Activated CD4-positive, alpha-beta memory T cell treated with anti-CD3 and anti-CD28 coated beads, Interleukin-2, amount 10 ng/mL, durations not matched to agents 7 days and 5 days (primary cell): ENCODE measurements at regions of chr17 and their contacts with region 1.

Region 1: GRCh38 chr17:38868817-38869525 is 887 bp upstream of the LASP1 start:
- DNase-seq: peak; percentile 90
- H3K4me3 Mint-ChIP-seq: peak overlapping the region; percentile 98
- H3K27ac Mint-ChIP-seq: peak overlapping the region; percentile 98
- H3K4me1 Mint-ChIP-seq: peaks cover 45% of the 10 kb centered on the region
- H3K27me3 Mint-ChIP-seq: no peaks in the 10 kb centered on the region

Region 2: GRCh38 chr17:38853292-38854219 is 15.4 kb before region 1 on chr17 and contains the start of gene RPL23:
- CTCF ChIA-PET with region 1: interaction called, 56 read pairs
- POLR2A ChIA-PET with region 1: interaction called, 201 read pairs
- DNase-seq: peak; percentile 94
- H3K4me3 Mint-ChIP-seq: peak within 1 kb of the TSS; percentile 95
- H3K27ac Mint-ChIP-seq: peak within 1 kb of the TSS; percentile 98
- H3K4me1 Mint-ChIP-seq: peaks cover 49% of the 10 kb centered on the region
- H3K27me3 Mint-ChIP-seq: no peaks in the 10 kb centered on the region
- total RNA-seq, gene RPL23: 933 to 960 TPM

Region 3: DNA sequence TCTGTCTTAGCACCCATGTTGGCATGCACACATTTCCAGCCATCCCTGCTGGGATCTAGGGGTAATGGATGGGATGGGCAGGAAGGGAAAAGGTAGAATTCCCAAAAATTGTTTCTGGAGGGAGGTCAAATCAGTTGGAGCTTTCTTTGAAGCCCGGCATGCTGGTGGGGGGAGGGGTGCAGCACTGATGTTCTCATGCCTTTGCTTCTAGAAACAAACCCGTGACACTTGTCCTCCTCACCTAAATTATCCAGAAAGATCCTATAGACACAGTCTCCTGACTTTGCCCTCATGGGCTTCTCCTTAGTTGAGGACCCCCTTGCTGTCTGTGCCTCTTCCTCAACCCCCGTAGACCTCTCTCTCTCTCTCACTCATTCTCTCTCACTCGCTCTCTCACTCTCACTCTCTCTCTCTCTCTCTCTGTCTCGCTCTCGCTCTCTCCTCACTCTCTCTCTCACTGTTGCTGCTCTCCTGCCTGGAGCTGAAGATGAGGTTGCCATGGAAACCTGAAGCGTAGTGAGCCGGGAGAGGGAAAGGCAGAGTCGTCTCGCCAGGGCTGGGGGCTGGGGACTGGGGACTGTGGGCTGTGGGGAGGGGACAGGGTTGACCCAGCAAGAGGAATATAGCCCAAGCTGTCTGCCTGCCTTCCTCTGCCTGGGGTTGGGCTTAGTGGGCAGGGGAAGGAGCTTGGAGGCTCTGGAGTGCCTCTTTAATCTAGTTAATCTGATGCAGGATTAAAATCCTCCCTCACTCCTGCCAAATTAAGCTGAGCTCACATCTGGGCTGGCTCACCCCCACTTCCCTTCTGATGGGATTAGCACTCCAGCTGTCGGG is 17.0 kb after region 1 on chr17:
- CTCF ChIA-PET with region 1: interaction called, 6 read pairs
- POLR2A ChIA-PET with region 1: interaction called, 39 read pairs
- DNase-seq: no peak
- H3K4me3 Mint-ChIP-seq: no peak overlapping the region
- H3K27ac Mint-ChIP-seq: peak overlapping the region; percentile 6
- H3K4me1 Mint-ChIP-seq: peaks cover 79% of the 10 kb centered on the region
- H3K27me3 Mint-ChIP-seq: no peaks in the 10 kb centered on the region

Region 4: DNA sequence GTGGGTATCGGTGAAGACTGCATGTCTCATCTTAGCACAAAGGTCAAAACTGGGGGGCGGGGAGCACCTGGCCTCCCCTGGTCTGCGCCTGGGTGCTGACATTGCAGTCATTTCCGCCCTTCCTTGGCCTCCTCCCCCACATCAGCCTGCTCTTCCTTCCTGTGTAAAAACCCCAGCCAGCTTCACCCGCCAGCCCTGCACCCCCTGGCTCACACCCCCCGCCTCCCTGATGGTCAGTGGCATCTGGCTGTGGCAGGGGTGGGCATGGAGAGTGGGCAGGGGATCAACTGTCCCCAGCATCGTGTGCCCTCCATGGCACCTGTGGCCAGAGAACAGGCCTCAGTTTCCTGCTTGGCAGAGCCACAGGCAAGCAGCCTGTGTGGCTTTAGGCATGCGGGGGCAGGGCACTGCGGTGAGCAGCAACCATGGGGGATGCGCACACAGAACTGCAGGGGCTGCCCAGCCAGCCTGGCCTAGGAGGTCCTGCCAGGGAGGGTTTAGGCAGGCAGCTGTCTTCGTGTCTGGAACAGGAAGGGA is 29.9 kb after region 1 on chr17:
- CTCF ChIA-PET with region 1: interaction called, 29 read pairs
- POLR2A ChIA-PET with region 1: interaction called, 144 read pairs
- DNase-seq: peak; percentile 86
- H3K4me3 Mint-ChIP-seq: peak overlapping the region; percentile 45
- H3K27ac Mint-ChIP-seq: peak overlapping the region; percentile 89
- H3K4me1 Mint-ChIP-seq: peaks cover 65% of the 10 kb centered on the region
- H3K27me3 Mint-ChIP-seq: no peaks in the 10 kb centered on the region

Region 5: GRCh38 chr17:39153599-39154051 is 284.7 kb after region 1 on chr17:
- CTCF ChIA-PET with region 1: interaction called, 34 read pairs
- POLR2A ChIA-PET with region 1: interaction called, 23 read pairs
- DNase-seq: peak; percentile 93
- H3K4me3 Mint-ChIP-seq: peak overlapping the region; percentile 97
- H3K27ac Mint-ChIP-seq: peak overlapping the region; percentile 83
- H3K4me1 Mint-ChIP-seq: peaks cover 31% of the 10 kb centered on the region
- H3K27me3 Mint-ChIP-seq: peaks cover 34% of the 10 kb centered on the region